ENCODE measurements at regions of chr16 and their contacts with region 1.

Region 1: GRCh38 chr16:28218104-28218503 is 6.3 kb upstream of the XPO6 start:
- DNase-seq: peak; percentile 60 to 82 (median 78)
- H3K4me3 ChIP-seq: no peak overlapping the region
- H3K27ac ChIP-seq: no peak overlapping the region
- H3K4me1 ChIP-seq: no peaks in the 10 kb centered on the region
- H3K27me3 ChIP-seq: no peaks in the 10 kb centered on the region

Region 2: DNA sequence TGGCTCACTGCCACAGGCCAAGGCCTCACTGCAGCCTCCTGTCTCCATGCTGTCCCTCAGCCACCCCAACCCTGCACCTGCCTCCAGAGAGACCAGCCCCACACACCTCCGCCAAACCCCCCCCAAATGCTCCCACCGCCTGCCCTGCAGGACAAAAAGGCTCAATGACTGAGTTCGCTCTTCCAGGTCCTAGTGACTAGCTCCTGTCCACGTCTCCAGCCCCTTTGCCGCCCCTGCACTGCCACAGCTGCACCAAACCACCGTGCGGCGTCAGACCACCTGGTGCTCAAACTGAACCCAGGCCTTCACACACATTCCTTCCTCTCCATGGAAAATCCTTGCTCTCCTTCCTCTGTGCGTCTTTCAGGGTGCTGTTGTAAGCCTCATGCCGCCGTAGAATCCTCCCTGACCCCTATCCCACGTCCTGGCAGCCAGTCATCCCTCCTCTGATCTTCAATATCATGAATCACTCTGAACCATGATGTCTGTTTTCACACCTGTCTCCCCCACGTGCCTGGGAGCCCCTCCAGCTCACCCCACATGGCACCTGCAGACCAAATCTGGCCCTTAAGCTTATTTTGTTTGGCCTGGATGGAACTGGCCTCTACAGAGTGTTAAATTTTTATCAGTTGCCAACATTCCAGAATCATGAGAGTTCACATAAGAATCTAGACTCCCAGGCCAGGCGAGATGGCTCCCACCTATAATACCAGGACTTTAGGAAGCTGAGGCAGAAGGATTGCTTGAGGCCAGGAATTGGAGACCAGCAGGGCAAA is 150.3 kb before region 1 on chr16:
- CTCF ChIA-PET with region 1: interaction called, 17 read pairs
- POLR2A ChIA-PET with region 1: no interaction called
- DNase-seq: no peak
- H3K4me3 ChIP-seq: no peak overlapping the region
- H3K27ac ChIP-seq: no peak overlapping the region
- H3K4me1 ChIP-seq: peaks cover 0 to 10% (median 6%) of the 10 kb centered on the region in 4 experiments
- H3K27me3 ChIP-seq: peaks cover 0 to 34% (median 16%) of the 10 kb centered on the region in 5 experiments

Region 3: DNA sequence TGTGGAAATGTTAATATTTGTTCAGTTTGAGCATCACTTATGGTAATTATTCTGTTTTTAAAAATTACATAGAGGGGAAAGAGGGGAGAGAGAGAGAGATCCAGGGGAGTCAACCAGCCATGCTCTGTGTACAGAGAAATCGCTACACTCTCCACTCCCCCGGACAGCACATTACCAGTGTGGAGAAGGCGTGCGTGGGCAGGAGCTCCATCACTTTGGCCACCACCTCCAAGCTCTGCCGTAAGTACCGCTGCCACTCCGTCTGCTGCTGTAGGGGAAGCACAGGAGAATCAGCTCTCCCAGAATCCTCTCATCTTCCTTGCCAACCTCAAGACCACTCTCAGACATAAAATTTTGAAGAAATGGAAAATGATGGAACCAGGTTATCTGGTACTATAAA is 84.4 kb before region 1 on chr16:
- CTCF ChIA-PET with region 1: interaction called, 13 read pairs
- POLR2A ChIA-PET with region 1: no interaction called
- DNase-seq: no peak
- H3K4me3 ChIP-seq: no peak overlapping the region
- H3K27ac ChIP-seq: no peak overlapping the region
- H3K4me1 ChIP-seq: peaks cover 0 to 18% (median 4%) of the 10 kb centered on the region in 4 experiments
- H3K27me3 ChIP-seq: no peaks in the 10 kb centered on the region

Region 4: GRCh38 chr16:28140788-28141618 is 77.1 kb before region 1 on chr16:
- CTCF ChIA-PET with region 1: interaction called, 12 read pairs
- POLR2A ChIA-PET with region 1: no interaction called
- DNase-seq: peak; percentile 77 to 96 (median 93)
- H3K4me3 ChIP-seq: peak overlapping the region in 1 of 7 experiments; percentile 16
- H3K27ac ChIP-seq: peak overlapping the region in 1 of 2 experiments; percentile 74
- H3K4me1 ChIP-seq: peaks cover 34 to 54% (median 40%) of the 10 kb centered on the region in 4 experiments
- H3K27me3 ChIP-seq: no peaks in the 10 kb centered on the region

Region 5: GRCh38 chr16:28283798-28284577 is 65.9 kb after region 1 on chr16:
- CTCF ChIA-PET with region 1: no interaction called
- POLR2A ChIA-PET with region 1: no interaction called
- DNase-seq: no peak
- H3K4me3 ChIP-seq: no peak overlapping the region
- H3K27ac ChIP-seq: no peak overlapping the region
- H3K4me1 ChIP-seq: peaks cover 0 to 9% (median 5%) of the 10 kb centered on the region in 4 experiments
- H3K27me3 ChIP-seq: no peaks in the 10 kb centered on the region

Measured in common myeloid progenitor, CD34-positive (primary cell).